ENCODE measurements at regions of chr19 and their contacts with region 1.

Region 1: DNA sequence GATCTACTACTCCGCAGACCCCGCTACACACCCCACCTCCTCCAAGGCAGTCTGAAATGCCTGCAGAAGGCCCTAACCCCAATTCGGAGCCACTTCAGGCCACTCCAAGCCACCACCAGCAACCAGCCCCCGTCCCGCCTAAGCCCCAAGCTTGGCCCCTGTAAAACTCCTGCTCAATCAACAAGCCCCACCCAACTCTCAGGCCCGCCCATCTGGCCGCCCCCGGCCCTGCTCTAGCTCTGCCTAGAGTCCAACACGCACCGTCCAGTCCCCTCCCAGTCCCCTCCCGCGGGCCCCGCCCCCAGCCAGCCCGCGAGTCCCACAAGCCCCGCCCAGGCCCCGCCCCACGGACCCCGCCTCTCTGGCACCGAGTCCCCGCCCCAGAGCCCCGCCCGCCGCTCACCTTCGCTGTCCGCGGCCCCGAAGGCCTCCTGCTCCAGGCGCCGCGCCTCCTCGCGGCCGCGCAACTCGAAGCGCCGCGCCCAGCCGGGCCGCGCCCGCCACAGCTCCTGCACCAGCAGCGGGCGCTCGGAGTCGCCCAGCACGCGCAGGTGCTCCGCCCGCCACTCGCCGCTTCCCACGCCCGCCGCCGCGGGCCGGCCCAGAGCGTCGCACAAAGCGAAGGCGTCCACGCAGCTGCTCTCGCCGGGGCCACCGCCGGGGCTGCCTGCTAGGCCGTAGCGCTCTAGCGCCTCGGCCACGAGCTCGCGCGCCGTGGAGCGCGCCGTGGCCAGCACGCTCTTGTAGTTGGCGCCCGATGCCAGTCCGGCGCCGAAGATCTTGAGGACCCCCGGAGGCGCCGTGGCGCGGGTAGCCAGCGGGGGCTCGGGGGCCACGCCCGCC is 1.6 kb downstream of the RASIP1 start:
- DNase-seq: peak; percentile 93
- H3K4me3 Mint-ChIP-seq: peak overlapping the region; percentile 66
- H3K27ac Mint-ChIP-seq: no peak overlapping the region
- H3K4me1 Mint-ChIP-seq: peaks cover 4% of the 10 kb centered on the region
- H3K27me3 Mint-ChIP-seq: no peaks in the 10 kb centered on the region
- CTCF ChIP-seq: peak; percentile 44

Region 2: DNA sequence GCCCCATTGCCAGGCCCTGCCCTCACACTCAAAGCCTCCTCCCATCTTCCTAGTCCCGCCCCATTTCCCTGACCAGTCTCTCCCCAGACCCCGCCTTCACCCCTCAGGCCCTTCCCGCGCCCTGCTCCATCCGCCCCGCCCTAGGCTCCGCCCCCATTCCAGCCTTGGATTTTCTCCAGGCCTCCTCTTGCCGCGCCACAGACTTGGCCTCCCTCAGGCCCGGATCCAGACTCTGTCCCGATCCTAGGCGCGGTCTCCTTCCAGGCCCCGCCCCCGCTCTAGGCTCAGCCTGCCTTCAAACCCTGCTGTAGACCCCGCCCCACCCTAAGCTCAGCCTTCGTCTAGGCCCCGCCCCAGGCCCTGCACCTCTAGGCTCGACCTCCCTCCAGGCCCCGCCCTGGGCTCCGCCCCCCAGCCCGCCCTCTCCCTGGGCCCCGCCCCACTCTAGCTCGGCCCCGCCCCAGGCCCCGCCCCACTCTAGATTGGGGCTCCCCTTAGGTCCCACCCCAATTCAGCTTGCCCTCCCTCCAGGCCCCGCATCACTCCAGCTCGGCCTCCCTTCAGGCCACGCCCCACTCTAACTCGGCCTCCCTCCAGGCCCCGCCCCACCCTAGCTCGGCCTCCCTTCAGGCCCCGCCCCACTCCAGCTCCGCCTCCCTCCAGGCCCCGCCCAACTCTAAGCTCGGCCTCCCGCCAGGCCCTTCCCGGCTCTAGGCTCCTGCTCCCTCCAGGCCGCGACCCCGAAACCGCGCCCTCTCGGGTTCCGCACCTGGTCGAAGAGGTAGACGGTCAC is 245.7 kb before region 1 on chr19:
- CTCF ChIA-PET with region 1: no interaction called
- POLR2A ChIA-PET with region 1: no interaction called
- intact Hi-C with region 1: no loop called
- DNase-seq: peak; percentile 99
- H3K4me3 Mint-ChIP-seq: peak overlapping the region; percentile 81
- H3K27ac Mint-ChIP-seq: peak overlapping the region; percentile 5
- H3K4me1 Mint-ChIP-seq: peaks cover 20% of the 10 kb centered on the region
- H3K27me3 Mint-ChIP-seq: no peaks in the 10 kb centered on the region
- CTCF ChIP-seq: no peak

Region 3: DNA sequence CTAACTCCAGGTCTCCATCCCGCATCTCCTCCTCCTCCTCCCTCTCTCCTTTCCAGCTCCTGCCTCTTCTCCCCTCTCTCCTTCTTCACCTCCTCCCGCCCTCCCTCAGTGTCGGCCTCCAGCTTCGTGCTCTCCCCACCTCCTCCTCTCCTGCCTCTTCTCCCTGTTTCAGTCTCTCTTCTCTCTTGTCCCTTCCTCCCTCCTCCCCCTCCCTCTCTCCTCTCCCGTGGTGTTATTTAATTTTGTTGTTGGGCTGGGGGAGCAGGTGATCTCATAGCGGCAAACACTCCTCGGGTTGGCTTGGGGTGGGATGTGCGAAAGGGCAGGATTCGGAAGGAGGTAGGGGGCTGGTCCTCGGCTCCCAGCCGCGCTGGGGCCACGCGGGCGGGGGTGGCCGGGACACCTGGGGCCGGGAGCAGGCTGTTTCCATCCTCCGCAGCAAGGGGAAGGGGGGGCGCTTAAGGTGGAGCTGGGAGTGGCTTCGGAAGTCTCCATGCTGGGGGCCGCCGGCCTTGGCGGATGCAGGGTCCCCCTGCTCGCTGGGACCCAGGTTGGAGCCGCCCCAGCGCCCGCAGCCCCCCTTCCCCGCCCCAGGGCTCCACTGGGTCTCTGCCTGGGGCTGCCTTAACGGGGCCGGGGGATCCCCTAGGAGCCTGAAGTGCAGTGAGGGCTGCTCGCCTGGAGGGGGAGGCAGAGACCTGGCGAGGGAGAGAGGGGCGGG is 92.6 kb before region 1 on chr19 and contains the start of gene CA11:
- CTCF ChIA-PET with region 1: interaction called, 6 read pairs
- POLR2A ChIA-PET with region 1: interaction called, 4 read pairs
- intact Hi-C with region 1: loop called (anchors 1 kb)
- DNase-seq: peak; percentile 90
- H3K4me3 Mint-ChIP-seq: peak within 1 kb of the TSS; percentile 73
- H3K27ac Mint-ChIP-seq: peak within 1 kb of the TSS; percentile 4
- H3K4me1 Mint-ChIP-seq: peaks cover 24% of the 10 kb centered on the region
- H3K27me3 Mint-ChIP-seq: peaks cover 10% of the 10 kb centered on the region
- CTCF ChIP-seq: peak; percentile 89
- total RNA-seq, gene CA11: 2.6 and 2.9 TPM in 2 replicates

Region 4: DNA sequence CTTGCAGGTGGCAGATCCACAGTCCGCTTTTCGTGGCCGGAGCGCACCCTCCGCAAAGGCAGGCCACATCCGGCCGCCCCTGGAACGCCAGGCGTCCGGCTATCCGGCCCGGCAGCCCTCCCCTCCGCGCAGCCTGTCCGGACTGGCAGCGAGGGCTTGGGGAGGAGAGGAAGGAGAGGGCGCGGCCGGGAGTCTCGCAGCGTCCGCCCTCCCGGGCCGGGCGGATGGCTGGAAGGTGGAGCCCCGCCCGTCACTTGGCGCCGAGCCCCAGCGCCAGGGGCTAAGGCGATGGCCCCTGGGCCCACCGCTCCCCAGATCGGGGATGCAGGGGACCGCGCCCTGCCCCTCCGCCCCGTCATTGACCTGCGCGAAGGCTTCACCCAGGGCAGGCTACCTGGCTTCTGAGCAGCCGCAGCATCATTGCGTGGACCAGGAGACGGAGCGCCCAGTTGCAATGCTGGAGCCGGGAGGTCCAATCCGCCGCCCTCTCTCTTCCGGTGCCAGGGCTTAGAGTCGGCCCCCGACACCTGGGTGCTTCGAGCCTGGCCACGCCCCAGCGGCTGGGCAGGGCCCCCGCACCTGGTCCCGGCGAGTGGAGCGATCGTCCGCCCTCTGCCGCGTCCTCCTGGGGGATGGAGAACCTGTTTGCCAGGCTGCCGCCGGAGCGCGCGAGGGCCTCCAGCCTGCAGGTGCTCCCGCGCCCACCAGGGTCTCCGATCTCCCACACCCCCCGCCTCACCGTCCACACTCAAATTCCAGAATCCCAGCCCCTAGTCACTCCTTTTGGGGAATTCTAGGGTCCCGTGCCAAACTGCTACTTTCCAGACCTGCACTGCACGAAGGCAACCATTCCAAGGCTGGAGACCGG is 14.0 kb after region 1 on chr19 and contains the start of gene FUT1:
- CTCF ChIA-PET with region 1: interaction called, 9 read pairs
- POLR2A ChIA-PET with region 1: interaction called, 10 read pairs
- intact Hi-C with region 1: no loop called
- DNase-seq: peak; percentile 91
- H3K4me3 Mint-ChIP-seq: peak within 1 kb of the TSS; percentile 77
- H3K27ac Mint-ChIP-seq: peak within 1 kb of the TSS; percentile 17
- H3K4me1 Mint-ChIP-seq: peaks cover 29% of the 10 kb centered on the region
- H3K27me3 Mint-ChIP-seq: no peaks in the 10 kb centered on the region
- CTCF ChIP-seq: no peak
- total RNA-seq, gene FUT1: 10.5 and 14.7 TPM in 2 replicates

Measured in MCF 10A (cell line).